Activated CD4-positive, alpha-beta memory T cell treated with anti-CD3 and anti-CD28 coated beads for 36 hours (primary cell): ENCODE measurements at regions of chr16 and their contacts with region 1.

Region 1: GRCh38 chr16:10918294-10919002 is 23.8 kb downstream of the DEXI start:
- DNase-seq: peak; percentile 92
- H3K4me3 Mint-ChIP-seq: no peak overlapping the region
- H3K27ac Mint-ChIP-seq: no peak overlapping the region
- H3K4me1 Mint-ChIP-seq: peaks cover 15% of the 10 kb centered on the region
- H3K27me3 Mint-ChIP-seq: no peaks in the 10 kb centered on the region

Region 2: DNA sequence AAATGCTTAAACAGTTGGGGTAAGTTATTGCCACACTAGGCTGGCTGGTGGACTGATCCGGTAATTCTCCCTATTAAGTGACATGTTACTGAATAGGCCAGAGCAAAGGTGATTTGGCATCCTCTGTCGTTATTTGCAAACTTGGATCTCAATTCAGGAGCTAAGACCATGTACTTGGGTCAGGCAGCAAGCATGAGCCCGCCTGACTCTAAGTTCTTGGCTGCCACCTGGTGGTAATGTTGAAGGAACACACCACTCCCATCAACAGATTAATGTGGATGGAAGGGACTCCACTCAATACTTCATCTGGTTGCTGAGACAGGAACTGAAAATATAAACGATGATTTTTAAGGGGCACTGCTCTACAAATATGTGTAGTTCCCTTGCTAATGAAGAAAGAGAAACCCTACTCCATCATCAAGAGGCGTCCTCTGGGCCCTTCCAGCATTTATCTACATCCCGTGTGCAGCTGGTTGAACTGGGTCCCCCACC is 408.9 kb before region 1 on chr16:
- CTCF ChIA-PET with region 1: interaction called, 33 read pairs
- POLR2A ChIA-PET with region 1: no interaction called
- intact Hi-C with region 1: no loop called
- DNase-seq: peak; percentile 66
- H3K4me3 Mint-ChIP-seq: no peak overlapping the region
- H3K27ac Mint-ChIP-seq: peak overlapping the region; percentile 24
- H3K4me1 Mint-ChIP-seq: peaks cover 22% of the 10 kb centered on the region
- H3K27me3 Mint-ChIP-seq: no peaks in the 10 kb centered on the region

Region 3: GRCh38 chr16:10737068-10737625 is 181.3 kb before region 1 on chr16:
- CTCF ChIA-PET with region 1: interaction called, 29 read pairs
- POLR2A ChIA-PET with region 1: no interaction called
- intact Hi-C with region 1: loop called (anchors 2 kb)
- DNase-seq: peak; percentile 78
- H3K4me3 Mint-ChIP-seq: peak overlapping the region; percentile 46
- H3K27ac Mint-ChIP-seq: peak overlapping the region; percentile 38
- H3K4me1 Mint-ChIP-seq: peaks cover 26% of the 10 kb centered on the region
- H3K27me3 Mint-ChIP-seq: no peaks in the 10 kb centered on the region

Region 4: GRCh38 chr16:10752843-10753523 is 165.5 kb before region 1 on chr16:
- CTCF ChIA-PET with region 1: interaction called, 16 read pairs
- POLR2A ChIA-PET with region 1: no interaction called
- intact Hi-C with region 1: no loop called
- DNase-seq: no peak
- H3K4me3 Mint-ChIP-seq: no peak overlapping the region
- H3K27ac Mint-ChIP-seq: no peak overlapping the region
- H3K4me1 Mint-ChIP-seq: peaks cover 30% of the 10 kb centered on the region
- H3K27me3 Mint-ChIP-seq: no peaks in the 10 kb centered on the region

Region 5: DNA sequence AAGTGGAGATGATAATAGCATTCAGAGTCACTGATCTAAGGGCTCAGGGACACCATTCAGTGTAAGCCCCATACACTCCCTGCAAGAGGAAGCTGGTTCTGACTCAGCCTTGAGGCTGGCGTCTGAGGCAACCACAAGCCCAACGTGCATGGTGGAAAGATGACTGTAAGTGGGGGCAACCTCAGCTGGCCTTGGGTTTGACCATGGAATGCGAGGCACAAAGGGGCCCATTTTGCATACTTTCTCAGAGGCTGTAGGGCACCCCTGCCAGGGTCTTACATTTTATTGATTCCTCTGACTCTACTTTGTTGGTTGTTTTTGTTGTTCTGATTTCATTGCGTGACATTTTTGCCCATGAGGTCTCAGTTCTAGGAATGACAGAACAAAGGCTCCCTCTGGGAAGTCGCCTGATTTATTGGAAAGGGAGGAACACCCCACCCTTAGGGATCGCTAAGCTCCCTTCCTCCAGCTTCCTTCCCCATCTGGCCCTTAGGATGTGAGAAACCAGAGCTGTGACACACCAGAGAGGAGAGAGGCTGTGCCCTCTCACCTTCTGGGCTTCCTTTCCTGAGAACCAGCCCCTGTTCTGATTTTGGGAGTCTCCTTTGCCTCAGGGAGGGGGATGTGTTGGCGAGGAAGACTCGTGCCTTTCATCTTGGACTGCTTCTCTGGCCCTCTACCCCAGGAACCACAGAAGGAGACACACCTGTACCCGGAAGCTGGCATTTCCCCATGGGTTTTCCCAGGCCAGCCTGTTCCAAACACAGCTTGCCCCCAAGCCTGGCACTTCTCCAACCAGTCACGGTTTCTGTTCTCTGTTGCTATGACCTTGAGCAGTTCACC is 47.1 kb before region 1 on chr16:
- CTCF ChIA-PET with region 1: interaction called, 23 read pairs
- POLR2A ChIA-PET with region 1: no interaction called
- intact Hi-C with region 1: loop called (anchors 2 kb)
- DNase-seq: peak; percentile 90
- H3K4me3 Mint-ChIP-seq: peak overlapping the region; percentile 36
- H3K27ac Mint-ChIP-seq: peak overlapping the region; percentile 85
- H3K4me1 Mint-ChIP-seq: peaks cover 59% of the 10 kb centered on the region
- H3K27me3 Mint-ChIP-seq: peaks cover 38% of the 10 kb centered on the region

Region 6: GRCh38 chr16:10937068-10937859 is 18.8 kb after region 1 on chr16:
- CTCF ChIA-PET with region 1: interaction called, 16 read pairs
- POLR2A ChIA-PET with region 1: no interaction called
- intact Hi-C with region 1: loop called (anchors 2 kb)
- DNase-seq: no peak
- H3K4me3 Mint-ChIP-seq: peak overlapping the region; percentile 41
- H3K27ac Mint-ChIP-seq: no peak overlapping the region
- H3K4me1 Mint-ChIP-seq: peaks cover 69% of the 10 kb centered on the region
- H3K27me3 Mint-ChIP-seq: no peaks in the 10 kb centered on the region